A673 (cell line): ENCODE measurements at regions of chr1 and their contacts with region 1.

Region 1: GRCh38 chr1:231357831-231358354 is 19.8 kb downstream of the SPRTN start:
- DNase-seq: peak; percentile 80
- H3K4me3 ChIP-seq: no peak overlapping the region
- H3K27ac ChIP-seq: no peak overlapping the region
- H3K4me1 ChIP-seq: no peaks in the 10 kb centered on the region
- H3K27me3 ChIP-seq: no peaks in the 10 kb centered on the region
- CTCF ChIP-seq: peak; percentile 81

Region 2: GRCh38 chr1:231045286-231045685 is 312.6 kb before region 1 on chr1:
- CTCF ChIA-PET with region 1: no interaction called
- POLR2A ChIA-PET with region 1: no interaction called
- intact Hi-C with region 1: no loop called
- DNase-seq: no peak
- H3K4me3 ChIP-seq: no peak overlapping the region
- H3K27ac ChIP-seq: no peak overlapping the region
- H3K4me1 ChIP-seq: peaks cover 10% of the 10 kb centered on the region
- H3K27me3 ChIP-seq: peaks cover 35% of the 10 kb centered on the region
- CTCF ChIP-seq: no peak

Region 3: GRCh38 chr1:231590453-231591198 is 232.7 kb after region 1 on chr1:
- CTCF ChIA-PET with region 1: interaction called, 3 read pairs
- POLR2A ChIA-PET with region 1: no interaction called
- intact Hi-C with region 1: loop called (anchors 1 kb)
- DNase-seq: peak; percentile 76
- H3K4me3 ChIP-seq: no peak overlapping the region
- H3K27ac ChIP-seq: no peak overlapping the region
- H3K4me1 ChIP-seq: no peaks in the 10 kb centered on the region
- H3K27me3 ChIP-seq: no peaks in the 10 kb centered on the region
- CTCF ChIP-seq: peak; percentile 91